Activated B cell treated with CpG ODN at 0.5 μM for 24 hours (primary cell): ENCODE measurements at regions of chr15 and their contacts with region 1.

Region 1: DNA sequence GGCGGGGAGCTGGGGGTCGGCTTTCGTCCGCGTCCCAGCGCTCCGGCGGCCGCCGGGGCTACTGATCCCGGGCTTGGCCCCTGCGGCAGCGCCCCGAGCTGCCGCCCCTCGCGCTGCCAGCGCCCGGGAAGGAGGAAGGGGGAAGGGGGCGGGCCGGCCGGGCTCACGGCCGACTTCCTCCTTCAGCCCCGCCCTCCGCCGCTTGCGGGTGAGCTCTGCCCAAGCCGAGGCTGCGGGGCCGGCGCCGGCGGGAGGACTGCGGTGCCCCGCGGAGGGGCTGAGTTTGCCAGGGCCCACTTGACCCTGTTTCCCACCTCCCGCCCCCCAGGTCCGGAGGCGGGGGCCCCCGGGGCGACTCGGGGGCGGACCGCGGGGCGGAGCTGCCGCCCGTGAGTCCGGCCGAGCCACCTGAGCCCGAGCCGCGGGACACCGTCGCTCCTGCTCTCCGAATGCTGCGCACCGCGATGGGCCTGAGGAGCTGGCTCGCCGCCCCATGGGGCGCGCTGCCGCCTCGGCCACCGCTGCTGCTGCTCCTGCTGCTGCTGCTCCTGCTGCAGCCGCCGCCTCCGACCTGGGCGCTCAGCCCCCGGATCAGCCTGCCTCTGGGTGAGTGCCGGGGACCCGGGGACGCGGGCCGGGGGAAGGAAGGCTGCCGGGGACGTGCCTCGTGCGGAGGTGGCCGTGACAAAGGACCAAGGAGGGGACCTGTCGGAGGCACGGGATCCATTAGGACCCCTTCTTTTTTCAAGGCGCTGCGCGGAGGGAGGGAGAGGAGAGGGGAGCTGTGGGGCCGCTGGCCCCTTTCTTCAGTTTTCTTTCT is at the start of gene SEMA4B:
- DNase-seq: peak; percentile 81
- ATAC-seq: peak; percentile 90
- H3K4me3 Mint-ChIP-seq: peak within 1 kb of the TSS; percentile 93
- H3K27ac Mint-ChIP-seq: peak within 1 kb of the TSS; percentile 93
- H3K4me1 Mint-ChIP-seq: peaks cover 77% of the 10 kb centered on the region
- H3K27me3 Mint-ChIP-seq: no peaks in the 10 kb centered on the region
- CTCF ChIP-seq: no peak
- total RNA-seq, gene SEMA4B: 68.1 and 85.1 TPM in 2 replicates

Region 2: DNA sequence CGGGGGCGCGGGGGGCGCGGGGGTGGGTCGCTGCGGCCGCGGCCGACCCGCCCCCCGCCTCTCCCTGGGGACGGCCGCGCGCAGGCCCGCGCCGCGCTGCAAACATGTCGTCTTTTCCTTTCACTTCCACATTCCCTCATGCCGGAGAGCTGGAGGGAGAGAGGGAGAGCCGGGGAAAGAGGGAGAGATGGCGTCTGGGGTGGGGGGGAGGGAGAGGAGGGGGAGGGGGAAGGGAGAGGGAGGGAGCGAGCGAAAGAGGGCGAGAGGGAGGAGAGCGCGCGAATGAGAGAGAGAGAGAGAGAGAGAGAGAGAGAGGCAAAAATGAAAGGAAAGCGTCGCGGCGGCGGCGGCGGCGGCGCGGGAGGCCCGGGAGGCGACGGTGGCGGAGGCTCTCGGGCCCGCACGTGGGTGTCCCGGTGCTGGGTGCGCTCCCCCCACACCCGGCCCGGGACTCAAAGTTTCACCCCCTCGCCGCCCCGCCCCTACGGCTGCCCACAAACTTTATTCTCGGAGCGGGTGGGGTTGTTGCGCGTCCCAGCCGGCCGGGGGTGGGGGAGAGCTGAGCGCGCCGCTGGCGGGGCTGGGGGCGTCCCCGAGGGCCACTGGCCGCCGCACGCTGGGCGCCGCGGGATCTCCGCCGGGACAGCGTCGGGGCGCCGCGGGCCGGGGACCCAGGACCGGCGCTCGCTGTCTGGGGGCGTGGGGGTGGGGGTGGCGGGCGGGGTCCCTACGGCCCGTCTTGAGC is 199.5 kb before region 1 on chr15:
- CTCF ChIA-PET with region 1: no interaction called
- POLR2A ChIA-PET with region 1: interaction called, 3 read pairs
- intact Hi-C with region 1: loop called (anchors 5 kb)
- DNase-seq: peak; percentile 59
- ATAC-seq: peak; percentile 60
- H3K4me3 Mint-ChIP-seq: peak overlapping the region; percentile 91
- H3K27ac Mint-ChIP-seq: peak overlapping the region; percentile 91
- H3K4me1 Mint-ChIP-seq: peaks cover 41% of the 10 kb centered on the region
- H3K27me3 Mint-ChIP-seq: no peaks in the 10 kb centered on the region
- CTCF ChIP-seq: no peak

Region 3: GRCh38 chr15:90151989-90152645 is 49.2 kb before region 1 on chr15:
- CTCF ChIA-PET with region 1: no interaction called
- POLR2A ChIA-PET with region 1: no interaction called
- intact Hi-C with region 1: no loop called
- DNase-seq: no peak
- ATAC-seq: no peak
- H3K4me3 Mint-ChIP-seq: no peak overlapping the region
- H3K27ac Mint-ChIP-seq: no peak overlapping the region
- H3K4me1 Mint-ChIP-seq: no peaks in the 10 kb centered on the region
- H3K27me3 Mint-ChIP-seq: no peaks in the 10 kb centered on the region
- CTCF ChIP-seq: no peak

Region 4: DNA sequence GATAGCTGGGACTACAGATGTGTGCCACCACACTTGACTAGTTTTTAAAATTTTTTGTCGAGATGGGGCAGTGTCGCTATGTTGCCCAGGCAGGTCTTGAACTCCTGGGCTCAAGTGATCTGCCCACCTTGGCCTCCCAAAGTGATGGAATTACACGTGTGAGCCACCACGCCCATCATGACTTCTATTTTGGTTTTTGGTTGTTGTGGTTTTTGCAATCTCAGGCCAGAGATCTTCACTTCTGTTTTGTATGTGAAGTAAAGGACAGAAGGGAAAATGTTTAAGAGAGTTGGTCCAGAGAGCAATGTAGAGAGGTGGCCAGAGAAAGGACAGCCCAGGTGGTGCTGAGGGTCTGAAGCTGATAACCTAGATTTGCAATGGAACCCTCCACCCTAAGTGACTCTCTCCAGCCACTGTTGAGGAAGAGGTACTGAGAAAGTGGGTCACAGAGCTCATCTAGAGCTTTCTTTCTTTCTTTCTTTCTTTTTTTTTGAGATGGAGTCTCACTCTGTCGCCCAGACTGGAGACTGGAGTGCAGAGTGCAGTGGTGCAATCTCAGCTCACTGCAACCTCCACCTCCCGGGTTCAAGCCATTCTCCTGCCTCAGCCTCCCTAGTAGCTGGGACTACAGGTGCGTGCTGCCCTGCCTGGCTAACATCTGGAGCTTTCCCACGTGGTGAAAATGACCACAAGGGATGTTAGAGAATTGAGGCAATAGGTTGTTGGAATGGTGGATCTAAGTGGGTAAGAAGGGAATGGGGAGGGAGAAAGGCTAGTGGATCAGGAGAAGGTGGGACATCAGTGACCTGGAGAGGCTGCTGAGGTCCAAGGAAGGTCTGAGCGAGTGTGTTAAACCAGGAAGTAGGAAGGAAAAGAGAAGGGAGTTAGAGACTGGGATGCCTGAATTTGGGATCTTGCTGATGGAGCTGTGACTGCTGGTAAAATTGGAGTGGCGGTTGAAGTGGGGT is 22.6 kb before region 1 on chr15:
- CTCF ChIA-PET with region 1: no interaction called
- POLR2A ChIA-PET with region 1: interaction called, 248 read pairs
- intact Hi-C with region 1: no loop called
- DNase-seq: no peak
- ATAC-seq: peak; percentile 62
- H3K4me3 Mint-ChIP-seq: peak overlapping the region; percentile 9
- H3K27ac Mint-ChIP-seq: peak overlapping the region; percentile 84
- H3K4me1 Mint-ChIP-seq: peaks cover 48% of the 10 kb centered on the region
- H3K27me3 Mint-ChIP-seq: no peaks in the 10 kb centered on the region
- CTCF ChIP-seq: no peak

Region 5: GRCh38 chr15:90184786-90185569 is 16.4 kb before region 1 on chr15:
- CTCF ChIA-PET with region 1: interaction called, 3 read pairs
- POLR2A ChIA-PET with region 1: interaction called, 248 read pairs
- intact Hi-C with region 1: loop called (anchors 2 kb)
- DNase-seq: peak; percentile 77
- ATAC-seq: peak; percentile 77
- H3K4me3 Mint-ChIP-seq: peak overlapping the region; percentile 90
- H3K27ac Mint-ChIP-seq: peak overlapping the region; percentile 88
- H3K4me1 Mint-ChIP-seq: peaks cover 75% of the 10 kb centered on the region
- H3K27me3 Mint-ChIP-seq: no peaks in the 10 kb centered on the region
- CTCF ChIP-seq: no peak

Region 6: GRCh38 chr15:90214553-90215196 is 13.3 kb after region 1 on chr15:
- CTCF ChIA-PET with region 1: interaction called, 9 read pairs
- POLR2A ChIA-PET with region 1: interaction called, 144 read pairs
- intact Hi-C with region 1: loop called (anchors 1 kb)
- DNase-seq: no peak
- ATAC-seq: peak; percentile 29
- H3K4me3 Mint-ChIP-seq: peak overlapping the region; percentile 59
- H3K27ac Mint-ChIP-seq: peak overlapping the region; percentile 95
- H3K4me1 Mint-ChIP-seq: peaks cover 97% of the 10 kb centered on the region
- H3K27me3 Mint-ChIP-seq: no peaks in the 10 kb centered on the region
- CTCF ChIP-seq: no peak

Region 7: GRCh38 chr15:90249203-90249863 is 48.0 kb after region 1 on chr15 and contains the start of gene TTLL13:
- CTCF ChIA-PET with region 1: no interaction called
- POLR2A ChIA-PET with region 1: interaction called, 13 read pairs
- intact Hi-C with region 1: no loop called
- DNase-seq: peak; percentile 60
- ATAC-seq: peak; percentile 79
- H3K4me3 Mint-ChIP-seq: peak within 1 kb of the TSS; percentile 76
- H3K27ac Mint-ChIP-seq: peak within 1 kb of the TSS; percentile 4
- H3K4me1 Mint-ChIP-seq: peaks cover 14% of the 10 kb centered on the region
- H3K27me3 Mint-ChIP-seq: no peaks in the 10 kb centered on the region
- CTCF ChIP-seq: no peak
- total RNA-seq, gene TTLL13: 0.49 and 2.2 TPM in 2 replicates